ENCODE measurements at regions of chr7 and their contacts with region 1.

Region 1: GRCh38 chr7:73522105-73522872 is at the start of gene BAZ1B:
- DNase-seq: peak; percentile 99
- H3K4me3 Mint-ChIP-seq: peak within 1 kb of the TSS; percentile 90
- H3K27ac Mint-ChIP-seq: peak within 1 kb of the TSS; percentile 96
- H3K4me1 Mint-ChIP-seq: peaks cover 52% of the 10 kb centered on the region
- H3K27me3 Mint-ChIP-seq: no peaks in the 10 kb centered on the region
- total RNA-seq, gene BAZ1B: 82.3 to 83.8 TPM

Region 2: GRCh38 chr7:73557108-73557396 is 34.8 kb after region 1 on chr7:
- CTCF ChIA-PET with region 1: interaction called, 4 read pairs
- POLR2A ChIA-PET with region 1: interaction called, 32 read pairs
- intact Hi-C with region 1: loop called (anchors 2 kb)
- DNase-seq: peak; percentile 95
- H3K4me3 Mint-ChIP-seq: peak overlapping the region; percentile 79
- H3K27ac Mint-ChIP-seq: peak overlapping the region; percentile 91
- H3K4me1 Mint-ChIP-seq: peaks cover 34% of the 10 kb centered on the region
- H3K27me3 Mint-ChIP-seq: peaks cover 2% of the 10 kb centered on the region

Measured in activated CD4-positive, alpha-beta memory T cell treated with anti-CD3 and anti-CD28 coated beads for 36 hours (primary cell).